ENCODE measurements at regions of chr13 and their contacts with region 1.

Region 1: GRCh38 chr13:30355384-30355699 is 48.0 kb upstream of the KATNAL1 start:
- DNase-seq: peak; percentile 84
- H3K4me3 ChIP-seq: peak overlapping the region; percentile 42
- H3K27ac ChIP-seq: peak overlapping the region; percentile 83
- H3K4me1 ChIP-seq: peaks cover 50% of the 10 kb centered on the region
- CTCF ChIP-seq: peak; percentile 91

Region 2: GRCh38 chr13:30334663-30335386 is 20.5 kb before region 1 on chr13:
- CTCF ChIA-PET with region 1: no interaction called
- POLR2A ChIA-PET with region 1: interaction called, 34 read pairs
- intact Hi-C with region 1: no loop called
- DNase-seq: peak; percentile 60
- H3K4me3 ChIP-seq: peak overlapping the region; percentile 58
- H3K27ac ChIP-seq: peak overlapping the region; percentile 98
- H3K4me1 ChIP-seq: peaks cover 80% of the 10 kb centered on the region
- CTCF ChIP-seq: peak; percentile 85

Region 3: DNA sequence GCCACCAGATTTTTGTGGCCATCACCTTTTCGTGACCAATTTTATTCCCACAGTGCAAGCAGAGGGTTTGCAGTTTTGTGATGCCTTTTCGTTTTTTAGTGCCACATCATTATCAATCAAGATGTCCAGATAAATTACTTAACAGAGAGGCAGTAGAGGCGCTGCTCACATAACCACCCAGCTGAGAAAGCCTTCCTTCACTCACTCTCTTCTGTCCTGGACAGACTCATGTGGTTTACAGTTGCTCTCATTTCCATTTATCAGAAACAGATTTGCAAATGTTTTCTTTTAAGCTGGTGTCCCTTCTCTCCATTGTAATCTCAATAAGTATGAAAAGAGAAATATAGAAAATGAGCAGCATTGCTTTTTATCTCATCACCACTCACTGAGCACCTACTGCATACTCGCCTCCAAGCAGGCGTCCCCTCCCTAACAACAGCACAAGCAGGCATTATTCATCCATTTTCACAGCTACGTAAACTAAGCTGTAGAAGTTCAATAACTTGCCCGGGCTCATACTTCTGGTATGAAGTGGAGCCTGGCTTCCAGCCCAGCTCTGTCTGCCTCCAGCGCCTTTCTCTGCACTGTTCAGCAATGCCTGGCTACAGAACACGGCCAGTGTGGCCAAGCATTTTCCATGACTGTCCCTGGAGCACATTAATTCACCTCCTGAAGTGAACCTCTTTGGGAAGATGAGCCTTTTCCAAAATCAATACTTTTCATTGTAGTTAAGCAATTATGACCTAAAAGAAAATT is 13.3 kb before region 1 on chr13:
- CTCF ChIA-PET with region 1: interaction called, 6 read pairs
- POLR2A ChIA-PET with region 1: interaction called, 34 read pairs
- intact Hi-C with region 1: no loop called
- DNase-seq: no peak
- H3K4me3 ChIP-seq: no peak overlapping the region
- H3K27ac ChIP-seq: no peak overlapping the region
- H3K4me1 ChIP-seq: peaks cover 10% of the 10 kb centered on the region
- CTCF ChIP-seq: no peak

Region 4: DNA sequence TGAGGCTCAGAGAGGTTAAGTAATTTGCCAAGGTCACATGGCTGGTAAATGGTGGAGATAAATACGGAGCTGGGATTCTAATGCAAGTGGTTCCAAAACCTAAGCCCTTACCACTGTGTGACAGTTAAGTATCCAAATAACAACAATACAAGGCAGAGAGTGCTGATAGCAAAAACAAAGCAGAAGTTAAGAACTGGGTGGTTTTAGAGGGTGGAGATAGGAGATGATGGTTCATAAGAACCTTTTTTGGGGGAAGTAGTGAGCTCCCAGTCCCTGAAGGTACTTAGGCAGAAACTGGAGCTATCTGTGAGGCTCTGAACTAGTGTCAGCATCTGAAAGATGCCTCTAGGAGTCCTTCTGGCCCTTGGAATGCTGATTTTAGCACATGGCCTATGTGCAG is 10.7 kb after region 1 on chr13:
- CTCF ChIA-PET with region 1: interaction called, 3 read pairs
- POLR2A ChIA-PET with region 1: interaction called, 29 read pairs
- intact Hi-C with region 1: loop called (anchors 1 kb)
- DNase-seq: no peak
- H3K4me3 ChIP-seq: no peak overlapping the region
- H3K27ac ChIP-seq: peak overlapping the region; percentile 27
- H3K4me1 ChIP-seq: peaks cover 42% of the 10 kb centered on the region
- CTCF ChIP-seq: no peak

Region 5: DNA sequence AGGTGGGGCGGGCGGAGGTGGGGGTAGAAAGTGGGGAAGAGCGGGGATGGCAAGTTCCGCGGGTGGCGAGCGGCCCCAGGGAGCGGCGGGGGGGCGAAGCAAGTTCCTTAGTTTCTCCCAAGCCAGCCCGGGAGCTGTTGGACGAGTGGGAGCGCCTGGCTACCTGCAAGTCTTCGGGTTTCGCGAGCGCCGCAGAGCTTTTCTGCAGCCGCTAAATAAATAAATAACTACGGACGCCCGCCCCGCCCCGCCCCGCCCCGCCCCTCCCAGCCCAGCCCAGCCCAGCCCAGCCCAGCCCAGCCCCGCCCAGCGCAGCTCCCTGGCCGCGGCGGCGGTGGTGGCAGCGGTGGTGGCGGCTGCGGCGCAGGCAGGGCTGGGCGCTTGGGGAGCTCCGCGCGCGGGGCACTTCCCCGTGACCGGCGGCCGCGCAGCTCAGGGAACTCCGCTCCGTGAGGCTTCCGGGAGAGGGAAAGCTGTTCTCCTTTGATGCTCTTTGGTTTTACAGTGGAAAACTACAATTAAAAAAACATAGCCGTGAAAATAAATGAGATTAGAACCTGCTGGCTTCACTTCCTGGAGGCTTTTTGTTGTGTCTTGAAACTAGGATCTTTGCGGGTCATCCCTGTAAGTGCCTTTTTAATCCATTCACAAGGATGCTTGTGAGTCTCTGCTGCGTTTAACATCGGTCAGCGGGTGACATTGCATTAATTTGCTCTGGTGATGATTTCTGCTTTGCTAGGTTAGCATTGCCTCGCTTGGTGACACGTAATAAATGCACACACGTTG is 66.9 kb after region 1 on chr13 and contains the start of gene UBE2L5:
- CTCF ChIA-PET with region 1: no interaction called
- POLR2A ChIA-PET with region 1: interaction called, 4 read pairs
- intact Hi-C with region 1: loop called (anchors 5 kb)
- DNase-seq: peak; percentile 88
- H3K4me3 ChIP-seq: peak within 1 kb of the TSS; percentile 72
- H3K27ac ChIP-seq: peak within 1 kb of the TSS; percentile 76
- H3K4me1 ChIP-seq: peaks cover 77% of the 10 kb centered on the region
- CTCF ChIP-seq: no peak
- total RNA-seq, gene UBE2L5: 0.15 and 0.22 TPM in 2 replicates

Region 6: GRCh38 chr13:30551189-30551588 is 195.8 kb after region 1 on chr13:
- CTCF ChIA-PET with region 1: no interaction called
- POLR2A ChIA-PET with region 1: interaction called, 3 read pairs
- intact Hi-C with region 1: loop called (anchors 5 kb)
- DNase-seq: peak; percentile 83
- H3K4me3 ChIP-seq: no peak overlapping the region
- H3K27ac ChIP-seq: no peak overlapping the region
- H3K4me1 ChIP-seq: peaks cover 25% of the 10 kb centered on the region
- CTCF ChIP-seq: peak; percentile 93

Region 7: DNA sequence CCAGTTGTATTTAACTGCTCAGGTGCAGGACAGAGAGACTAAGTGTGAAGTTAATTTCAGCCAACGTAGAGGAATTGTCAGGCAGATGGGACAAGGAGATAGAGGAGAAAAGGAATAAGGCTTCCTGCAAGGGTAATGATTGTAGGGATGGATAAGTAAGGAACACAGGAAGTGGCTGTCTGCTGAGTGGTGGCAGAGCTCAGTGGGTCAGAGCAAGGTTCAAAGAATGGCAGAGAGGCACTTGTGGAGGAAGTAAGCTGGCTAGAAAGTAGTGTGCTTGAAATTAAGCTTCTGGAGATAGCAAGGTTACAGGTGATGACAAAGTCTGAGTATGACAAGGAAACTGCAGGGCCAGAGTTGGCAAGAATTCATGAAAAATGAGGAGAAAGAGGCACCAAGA is 310.3 kb after region 1 on chr13:
- CTCF ChIA-PET with region 1: no interaction called
- POLR2A ChIA-PET with region 1: no interaction called
- intact Hi-C with region 1: no loop called
- DNase-seq: peak; percentile 31
- H3K4me3 ChIP-seq: no peak overlapping the region
- H3K27ac ChIP-seq: no peak overlapping the region
- H3K4me1 ChIP-seq: peaks cover 49% of the 10 kb centered on the region
- CTCF ChIP-seq: no peak

Region 8: GRCh38 chr13:30711375-30711774 is 356.0 kb after region 1 on chr13:
- CTCF ChIA-PET with region 1: no interaction called
- POLR2A ChIA-PET with region 1: no interaction called
- intact Hi-C with region 1: no loop called
- DNase-seq: no peak
- H3K4me3 ChIP-seq: no peak overlapping the region
- H3K27ac ChIP-seq: no peak overlapping the region
- H3K4me1 ChIP-seq: no peaks in the 10 kb centered on the region
- CTCF ChIP-seq: no peak